ENCODE measurements at regions of chr15 and their contacts with region 1.

Region 1: DNA sequence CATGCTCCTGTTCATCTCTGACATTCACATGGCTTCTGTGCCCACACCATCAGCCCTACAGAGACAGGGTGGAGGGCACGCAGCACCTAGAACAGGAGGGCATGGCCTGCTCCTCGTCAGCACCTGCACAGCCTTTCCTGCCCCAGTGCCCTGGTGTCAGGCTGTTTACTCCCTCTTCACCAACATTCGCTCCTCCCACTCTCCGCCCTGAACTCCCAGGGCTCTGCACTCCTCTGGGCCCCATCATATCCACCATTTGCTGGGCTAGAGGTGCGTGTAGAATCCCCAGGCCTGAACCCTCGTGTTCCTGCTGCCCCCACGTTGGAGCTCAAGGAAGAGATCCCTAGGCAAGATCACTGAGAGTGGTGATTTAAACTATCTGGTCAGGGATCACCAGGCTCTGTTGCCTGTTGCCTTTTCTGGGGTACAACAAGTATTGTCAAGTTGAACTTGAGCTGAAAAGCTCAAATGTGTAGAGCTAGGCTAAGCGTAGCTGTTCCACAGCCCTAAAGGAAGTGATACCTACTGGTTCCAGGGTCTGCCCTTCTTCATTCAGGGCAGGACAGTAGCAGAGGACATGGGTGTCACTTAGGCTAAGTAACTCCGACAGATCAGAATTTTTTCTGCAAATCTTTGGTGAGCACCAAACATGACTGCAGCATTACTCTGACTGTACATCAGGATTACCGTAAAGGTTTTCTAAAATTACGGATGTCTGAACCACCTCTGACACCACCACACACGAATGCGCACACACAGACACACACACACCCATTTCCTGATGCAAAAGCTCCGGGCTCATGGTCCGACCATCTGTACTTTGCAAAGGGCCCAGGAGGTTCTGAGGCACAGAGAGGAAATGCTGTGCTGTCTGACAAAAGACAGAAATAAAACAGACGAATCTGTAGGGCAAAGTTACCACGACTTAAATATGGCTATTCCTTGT is 43.7 kb upstream of the GNB5 start:
- DNase-seq: peak in 13 of 14 experiments; percentile 20 to 69 (median 49)
- ATAC-seq: peak; percentile 85
- H3K4me3 ChIP-seq: no peak overlapping the region
- H3K4me3 Mint-ChIP-seq: peak overlapping the region; percentile 68
- H3K27ac ChIP-seq: peak overlapping the region; percentile 54 to 69
- H3K27ac Mint-ChIP-seq: peak overlapping the region; percentile 98
- H3K4me1 ChIP-seq: peaks cover 38% of the 10 kb centered on the region
- H3K4me1 Mint-ChIP-seq: peaks cover 49% of the 10 kb centered on the region
- H3K27me3 ChIP-seq: no peaks in the 10 kb centered on the region
- H3K27me3 Mint-ChIP-seq: no peaks in the 10 kb centered on the region
- CTCF ChIP-seq: no peak

Region 2: GRCh38 chr15:52093539-52094502 is 141.0 kb before region 1 on chr15:
- CTCF ChIA-PET with region 1: no interaction called
- POLR2A ChIA-PET with region 1: no interaction called
- intact Hi-C with region 1: no loop called
- DNase-seq: no peak
- ATAC-seq: no peak
- H3K4me3 ChIP-seq: no peak overlapping the region
- H3K4me3 Mint-ChIP-seq: no peak overlapping the region
- H3K27ac ChIP-seq: no peak overlapping the region
- H3K27ac Mint-ChIP-seq: no peak overlapping the region
- H3K4me1 ChIP-seq: no peaks in the 10 kb centered on the region
- H3K4me1 Mint-ChIP-seq: no peaks in the 10 kb centered on the region
- H3K27me3 ChIP-seq: peaks cover 0 to 4% of the 10 kb centered on the region in 2 experiments
- H3K27me3 Mint-ChIP-seq: no peaks in the 10 kb centered on the region
- CTCF ChIP-seq: no peak

Region 3: GRCh38 chr15:52217186-52217585 is 17.7 kb before region 1 on chr15:
- CTCF ChIA-PET with region 1: no interaction called
- POLR2A ChIA-PET with region 1: interaction called, 18 read pairs
- intact Hi-C with region 1: no loop called
- DNase-seq: peak in 5 of 14 experiments; percentile 18 to 42 (median 29)
- ATAC-seq: no peak
- H3K4me3 ChIP-seq: no peak overlapping the region
- H3K4me3 Mint-ChIP-seq: no peak overlapping the region
- H3K27ac ChIP-seq: no peak overlapping the region
- H3K27ac Mint-ChIP-seq: no peak overlapping the region
- H3K4me1 ChIP-seq: peaks cover 21% of the 10 kb centered on the region
- H3K4me1 Mint-ChIP-seq: peaks cover 16% of the 10 kb centered on the region
- H3K27me3 ChIP-seq: no peaks in the 10 kb centered on the region
- H3K27me3 Mint-ChIP-seq: no peaks in the 10 kb centered on the region
- CTCF ChIP-seq: peak; percentile 24